Heart right ventricle (tissue), 16 donors: ENCODE measurements at regions of chr12 and their contacts with region 1.

Region 1: DNA sequence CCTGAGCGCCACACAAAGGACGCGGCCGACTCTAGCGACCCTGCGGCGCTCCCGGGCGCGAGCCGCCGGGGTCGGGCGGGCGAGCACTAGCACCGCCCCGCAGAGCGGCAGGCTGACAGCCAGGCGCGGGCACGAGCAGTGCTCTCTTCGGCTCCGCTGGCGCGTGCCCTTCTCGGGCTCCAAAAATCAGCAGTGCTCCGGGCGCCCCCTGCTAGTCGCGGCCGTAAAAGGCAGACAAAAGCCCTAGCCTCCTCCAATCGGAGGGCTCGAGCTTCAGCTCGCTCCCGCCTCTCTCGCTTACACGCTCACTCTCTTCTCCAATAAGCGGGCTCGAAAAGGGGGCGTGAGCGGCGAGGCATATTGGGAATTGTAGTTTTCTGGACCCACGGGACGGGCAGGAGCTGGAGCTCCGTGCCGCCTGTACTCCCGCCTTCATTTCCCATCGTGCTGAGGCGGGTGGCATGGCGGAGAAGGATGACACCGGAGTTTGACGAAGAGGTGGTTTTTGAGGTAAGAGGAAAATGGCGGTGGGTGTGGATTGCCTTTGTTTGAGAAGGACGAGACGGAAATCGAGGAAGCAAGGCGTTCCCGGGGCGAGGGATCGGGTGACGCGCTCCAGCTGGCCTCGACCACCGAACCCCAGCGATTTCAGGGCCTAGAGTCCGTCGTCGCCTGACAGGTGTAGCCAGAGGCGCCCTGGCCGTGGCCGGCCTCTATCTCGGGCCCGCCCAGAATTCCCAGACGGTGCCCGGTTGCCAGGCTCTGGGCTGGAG is at the starts of genes FGD6 and VEZT:
- DNase-seq: peak; percentile 98 to 99
- ATAC-seq: peak; percentile 95 to 97 (median 97)
- H3K4me3 ChIP-seq: peak within 1 kb of the TSS; percentile 72 to 92 (median 86)
- H3K27ac ChIP-seq: peak within 1 kb of the TSS; percentile 92 to 98 (median 96)
- H3K4me1 ChIP-seq: peaks cover 0 to 72% (median 39%) of the 10 kb centered on the region in 9 donors
- H3K27me3 ChIP-seq: no peaks in the 10 kb centered on the region
- CTCF ChIP-seq: peak in 8 of 9 donors; percentile 57 to 86 (median 74)
- total RNA-seq, gene FGD6: 15.6 to 33.4 (median 22.6) TPM
- total RNA-seq, gene VEZT: 56.0 to 92.5 (median 75.0) TPM

Region 2: GRCh38 chr12:94898388-94898787 is 319.2 kb before region 1 on chr12:
- intact Hi-C with region 1: no loop called
- DNase-seq: no peak
- ATAC-seq: no peak
- H3K4me3 ChIP-seq: no peak overlapping the region
- H3K27ac ChIP-seq: no peak overlapping the region
- H3K4me1 ChIP-seq: no peaks in the 10 kb centered on the region
- H3K27me3 ChIP-seq: no peaks in the 10 kb centered on the region
- CTCF ChIP-seq: peak in 5 of 9 donors; percentile 9 to 43 (median 32)

Region 3: DNA sequence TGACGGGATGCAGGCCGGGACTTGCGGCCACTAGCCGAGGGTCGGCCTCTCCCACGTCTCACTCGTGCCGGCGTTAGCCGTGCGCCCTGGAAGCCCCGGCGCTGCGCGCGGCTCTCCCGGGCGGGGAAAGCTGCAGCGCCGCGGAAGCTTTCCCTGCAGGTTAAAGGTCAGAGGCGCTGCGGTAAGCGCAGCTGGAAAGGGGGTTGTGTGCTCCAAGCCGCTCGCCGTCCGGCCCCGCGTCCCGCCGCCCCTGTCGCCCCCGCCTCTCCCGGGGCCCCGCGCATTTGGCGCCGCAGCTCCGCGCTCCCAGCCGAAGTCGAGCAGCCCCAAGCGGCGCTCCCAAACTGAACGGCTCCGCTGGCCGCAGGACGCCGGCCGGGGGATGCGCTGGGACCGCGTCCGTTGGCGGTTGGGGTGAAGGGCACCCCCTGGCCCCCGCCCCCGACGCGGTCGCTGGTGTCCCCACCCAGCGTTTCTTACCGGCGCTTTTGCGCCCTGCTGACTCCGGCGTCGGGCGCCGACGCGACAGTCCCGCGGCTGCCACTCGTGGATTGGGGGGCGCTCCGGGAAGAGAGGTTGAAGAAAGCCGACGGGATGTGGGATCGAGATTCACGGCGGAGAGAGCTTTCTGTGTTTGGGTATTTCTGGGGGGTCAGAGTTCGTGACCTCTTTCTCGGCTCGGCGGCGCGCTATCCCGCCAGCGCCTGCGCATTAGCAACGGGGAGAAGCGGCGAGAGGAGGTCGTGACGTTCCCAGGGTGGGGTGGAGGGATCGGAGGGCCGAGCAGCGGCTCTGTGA is 144.5 kb before region 1 on chr12 and contains the start of gene NR2C1:
- intact Hi-C with region 1: loop called in 1 of 10 experiments (anchors 5 kb)
- DNase-seq: peak; percentile 92 to 96
- ATAC-seq: peak; percentile 96 to 99 (median 98)
- H3K4me3 ChIP-seq: peak within 1 kb of the TSS; percentile 72 to 100 (median 96)
- H3K27ac ChIP-seq: peak within 1 kb of the TSS; percentile 62 to 97 (median 92)
- H3K4me1 ChIP-seq: peaks cover 0 to 45% (median 9%) of the 10 kb centered on the region in 9 donors
- H3K27me3 ChIP-seq: no peaks in the 10 kb centered on the region
- CTCF ChIP-seq: no peak
- total RNA-seq, gene NR2C1: 33.6 to 46.0 (median 38.3) TPM

Region 4: GRCh38 chr12:95143621-95144205 is 73.8 kb before region 1 on chr12:
- intact Hi-C with region 1: loop called in 3 of 10 experiments (anchors 5 to 10 kb)
- DNase-seq: peak in 1 of 2 donors; percentile 38
- ATAC-seq: peak; percentile 76 to 95 (median 84)
- H3K4me3 ChIP-seq: no peak overlapping the region
- H3K27ac ChIP-seq: peak overlapping the region in 9 of 10 donors; percentile 22 to 83 (median 53)
- H3K4me1 ChIP-seq: peaks cover 0 to 29% (median 17%) of the 10 kb centered on the region in 9 donors
- H3K27me3 ChIP-seq: no peaks in the 10 kb centered on the region
- CTCF ChIP-seq: peak in 1 of 9 donors; percentile 11

Region 5: DNA sequence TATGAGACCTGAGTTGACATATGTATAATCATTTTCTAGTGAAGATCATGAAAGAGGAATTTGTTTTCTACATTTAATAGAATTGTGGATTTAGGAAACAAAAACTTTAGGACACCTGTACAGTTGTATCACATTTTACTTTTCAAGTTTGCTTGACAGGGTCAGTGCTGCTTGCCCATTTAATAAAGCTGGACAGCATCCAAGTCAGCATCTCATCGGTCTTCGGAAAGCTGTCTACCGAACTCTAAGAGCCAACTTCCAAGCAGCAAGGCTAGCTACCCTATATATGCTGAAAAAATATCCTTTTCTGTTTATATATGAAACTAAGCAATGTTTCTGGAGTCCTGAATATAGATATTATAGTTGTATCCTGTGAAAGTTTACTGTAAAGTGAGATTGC is 52.3 kb after region 1 on chr12:
- intact Hi-C with region 1: loop called in 1 of 10 experiments (anchors 5 kb)
- DNase-seq: no peak
- ATAC-seq: no peak
- H3K4me3 ChIP-seq: no peak overlapping the region
- H3K27ac ChIP-seq: peak overlapping the region in 1 of 10 donors; percentile 8
- H3K4me1 ChIP-seq: peaks cover 0 to 23% (median 14%) of the 10 kb centered on the region in 9 donors
- H3K27me3 ChIP-seq: no peaks in the 10 kb centered on the region
- CTCF ChIP-seq: no peak

Region 6: GRCh38 chr12:95412482-95413311 is 195.1 kb after region 1 on chr12:
- intact Hi-C with region 1: no loop called
- DNase-seq: no peak
- ATAC-seq: no peak
- H3K4me3 ChIP-seq: no peak overlapping the region
- H3K27ac ChIP-seq: no peak overlapping the region
- H3K4me1 ChIP-seq: peaks cover 0 to 7% (median 0%) of the 10 kb centered on the region in 9 donors
- H3K27me3 ChIP-seq: no peaks in the 10 kb centered on the region
- CTCF ChIP-seq: no peak

Region 7: DNA sequence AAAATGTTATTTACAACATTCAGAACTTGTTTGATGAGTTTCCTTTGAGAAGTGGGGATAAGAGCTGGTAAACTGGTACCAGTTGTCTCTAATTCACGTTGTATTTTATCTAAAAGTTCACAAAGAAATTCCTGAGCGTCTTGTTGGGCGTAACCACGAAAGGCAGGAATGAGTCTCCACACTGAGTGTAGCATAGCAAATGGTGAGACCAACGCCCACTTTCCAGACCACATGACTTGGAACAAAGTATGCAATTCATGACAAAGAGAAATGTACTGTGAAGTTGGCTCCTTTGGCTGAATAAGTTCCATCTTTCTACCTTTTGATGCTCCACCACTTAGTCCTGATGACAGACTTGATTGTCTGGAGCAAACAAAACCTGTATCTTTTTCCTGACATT is 315.3 kb after region 1 on chr12:
- intact Hi-C with region 1: loop called in 1 of 10 experiments (anchors 10 kb)
- DNase-seq: no peak
- ATAC-seq: no peak
- H3K4me3 ChIP-seq: no peak overlapping the region
- H3K27ac ChIP-seq: no peak overlapping the region
- H3K4me1 ChIP-seq: no peaks in the 10 kb centered on the region
- H3K27me3 ChIP-seq: no peaks in the 10 kb centered on the region
- CTCF ChIP-seq: no peak

Region 8: DNA sequence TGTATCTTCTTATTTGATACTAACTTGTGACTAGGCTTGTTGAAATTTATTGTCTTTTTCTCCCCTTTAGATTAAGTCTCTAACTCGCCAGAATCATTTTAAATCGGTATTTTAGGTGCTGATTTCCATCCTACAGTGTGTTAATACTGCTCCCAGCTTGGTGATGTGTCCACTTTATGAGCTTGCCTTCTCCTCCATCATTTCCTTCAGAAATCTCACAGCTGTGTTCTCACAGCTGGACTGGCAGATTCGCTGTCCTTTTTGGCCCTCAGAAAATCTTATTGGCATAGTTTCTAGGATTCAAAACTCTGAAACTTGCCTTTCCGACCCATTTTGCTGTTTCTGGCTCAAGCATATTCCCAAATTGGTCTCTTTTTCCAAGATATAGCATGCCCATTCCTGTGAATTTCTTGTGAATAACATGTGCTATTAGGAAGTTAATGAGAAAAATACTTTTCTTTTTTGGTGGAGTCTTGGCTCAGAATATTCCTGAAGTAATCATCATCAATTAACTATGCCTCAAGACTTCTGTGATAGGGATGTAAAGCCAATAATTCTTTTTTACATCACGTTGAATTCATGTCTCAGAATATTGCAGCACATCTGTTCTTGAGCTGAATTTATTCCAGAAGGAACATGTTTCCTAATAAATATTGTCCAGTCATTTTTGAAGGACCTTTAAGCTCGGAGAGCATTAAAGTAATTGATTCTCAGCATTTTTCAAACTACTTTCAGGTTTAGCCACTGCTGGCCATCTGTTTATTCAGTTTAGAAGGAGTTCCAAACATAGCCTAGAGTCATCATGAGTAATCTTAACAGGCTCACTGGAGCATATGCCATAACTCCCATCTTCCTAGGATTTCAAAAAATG is 383.8 kb after region 1 on chr12:
- intact Hi-C with region 1: no loop called
- DNase-seq: no peak
- ATAC-seq: peak in 6 of 8 donors; percentile 47 to 80 (median 63)
- H3K4me3 ChIP-seq: no peak overlapping the region
- H3K27ac ChIP-seq: peak overlapping the region in 7 of 10 donors; percentile 34 to 62 (median 50)
- H3K4me1 ChIP-seq: peaks cover 9 to 35% (median 18%) of the 10 kb centered on the region in 9 donors
- H3K27me3 ChIP-seq: no peaks in the 10 kb centered on the region
- CTCF ChIP-seq: no peak

Region 9: GRCh38 chr12:95663525-95663924 is 446.0 kb after region 1 on chr12:
- intact Hi-C with region 1: no loop called
- DNase-seq: no peak
- ATAC-seq: peak in 4 of 8 donors; percentile 25 to 60 (median 38)
- H3K4me3 ChIP-seq: no peak overlapping the region
- H3K27ac ChIP-seq: peak overlapping the region in 9 of 10 donors; percentile 6 to 71 (median 50)
- H3K4me1 ChIP-seq: peaks cover 0 to 35% (median 11%) of the 10 kb centered on the region in 9 donors
- H3K27me3 ChIP-seq: no peaks in the 10 kb centered on the region
- CTCF ChIP-seq: no peak